Right ventricle myocardium inferior (tissue), 1 donor: ENCODE measurements at regions of chr2 and their contacts with region 1.

Region 1: GRCh38 chr2:10331027-10331701 is 28.5 kb downstream of the HPCAL1 start:
- DNase-seq: peak; percentile 87
- ATAC-seq: peak; percentile 63

Region 2: DNA sequence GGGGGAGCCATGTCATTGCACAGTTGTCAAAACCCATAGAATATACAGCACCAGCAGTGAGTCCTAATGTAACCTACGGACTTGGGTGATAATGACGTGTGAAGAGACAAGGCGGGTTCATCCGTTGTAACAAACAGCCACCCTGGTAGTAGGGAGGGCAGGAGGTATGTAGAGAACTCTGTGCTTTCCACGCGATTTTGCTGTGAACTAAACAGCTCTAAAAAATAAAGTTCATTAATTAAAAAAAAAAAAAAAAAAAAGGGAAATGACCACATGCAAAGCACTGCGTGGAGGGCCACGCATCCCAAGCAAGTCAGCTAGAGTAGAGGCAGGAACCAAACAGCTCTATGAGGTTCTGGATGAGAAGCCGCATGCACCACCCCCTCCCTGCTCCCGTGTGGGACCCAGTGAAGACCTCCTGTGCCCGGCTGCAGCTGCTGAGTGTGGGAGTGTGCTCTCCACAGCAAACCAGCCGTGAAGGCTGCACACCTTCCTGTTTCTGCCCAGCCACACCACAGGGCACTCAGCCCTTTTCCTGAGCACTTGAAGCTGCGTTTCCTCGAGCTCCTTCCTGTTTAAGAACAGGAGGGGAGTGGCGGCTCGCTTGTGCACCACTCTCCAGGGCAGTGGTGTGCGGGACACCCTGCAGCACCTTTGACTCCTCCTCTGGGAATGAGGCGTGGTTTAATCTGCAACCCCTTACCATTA is 51.3 kb after region 1 on chr2:
- intact Hi-C with region 1: loop called (anchors 5 kb)
- DNase-seq: peak; percentile 81
- ATAC-seq: peak; percentile 36

Region 3: GRCh38 chr2:10392548-10392947 is 61.4 kb after region 1 on chr2:
- intact Hi-C with region 1: no loop called
- DNase-seq: no peak
- ATAC-seq: no peak

Region 4: DNA sequence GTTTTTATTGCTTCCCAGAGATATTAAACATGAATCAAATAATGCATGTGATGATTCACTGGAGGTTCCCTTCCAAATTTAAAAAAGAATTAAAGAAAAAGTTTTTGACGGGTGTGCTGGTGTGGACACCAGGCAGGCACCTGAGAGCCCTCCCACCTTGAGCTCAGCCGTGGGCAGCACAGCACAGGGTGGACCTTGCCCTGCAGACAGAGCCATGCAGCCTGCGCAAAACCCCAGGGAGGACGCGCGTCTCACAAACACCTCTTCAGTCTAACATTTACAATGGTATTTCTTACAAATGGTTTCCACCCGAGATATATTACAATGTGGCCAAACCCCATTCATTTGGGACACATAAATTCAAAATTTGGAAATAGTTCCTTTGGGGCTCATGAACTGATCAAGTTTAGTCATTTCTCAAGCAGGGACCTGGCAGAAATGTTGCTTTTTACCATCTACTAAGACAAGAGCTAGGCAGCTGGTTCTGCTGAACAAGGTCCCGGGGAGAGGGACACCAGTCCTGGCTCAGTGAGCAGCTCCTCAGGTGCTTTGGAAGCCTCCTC is 71.6 kb after region 1 on chr2:
- intact Hi-C with region 1: loop called (anchors 2 kb)
- DNase-seq: peak; percentile 13
- ATAC-seq: no peak